ENCODE measurements at regions of chr9 and their contacts with region 1.

Region 1: DNA sequence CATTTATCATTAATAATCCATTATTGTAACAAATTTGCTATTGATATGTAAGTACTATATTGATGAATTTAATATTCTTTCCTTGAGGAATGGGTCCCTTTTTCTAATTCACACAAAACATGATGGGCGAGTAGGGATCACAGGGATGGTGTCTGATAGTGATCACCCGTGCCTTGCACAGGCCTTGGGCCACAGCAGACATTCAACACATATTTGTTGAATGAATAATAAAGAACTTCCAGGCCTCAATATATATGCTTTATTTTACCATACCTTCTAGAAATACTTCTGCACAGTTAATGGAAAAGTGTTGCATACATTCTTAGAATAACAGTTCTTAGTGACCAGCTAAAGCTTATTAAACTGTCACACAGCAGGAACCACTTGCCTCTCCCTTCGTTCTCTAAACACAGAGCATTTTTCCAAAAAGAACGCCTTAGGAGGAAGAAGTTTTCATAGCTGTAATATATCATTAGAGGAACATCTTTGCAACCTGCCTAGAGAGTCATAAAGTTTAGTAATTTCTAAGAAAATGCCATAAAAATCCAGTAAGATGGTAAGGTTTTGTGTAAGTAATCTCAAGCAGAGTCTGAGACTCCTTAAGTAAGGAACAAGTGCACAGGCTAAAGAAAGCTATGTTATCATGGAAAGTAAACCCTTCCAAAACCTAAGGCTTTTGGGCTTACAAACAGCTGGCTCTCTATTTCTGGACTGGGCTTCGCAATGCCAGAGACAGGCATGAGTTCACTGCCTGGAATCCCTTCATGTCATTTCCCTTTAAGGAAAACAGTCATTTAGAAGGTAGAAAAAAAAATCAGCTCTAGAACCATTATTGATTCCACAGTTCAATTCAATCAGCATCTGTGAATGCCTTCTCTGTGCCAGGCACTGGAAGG is 17.7 kb downstream of the TTLL11 start:
- DNase-seq: peak in 1 of 2 donors; percentile 82
- H3K4me3 ChIP-seq: peak overlapping the region in 1 of 2 donors; percentile 50
- H3K27ac ChIP-seq: peak overlapping the region; percentile 91 to 97
- H3K4me1 ChIP-seq: peaks cover 10 to 35% of the 10 kb centered on the region in 2 donors
- H3K27me3 ChIP-seq: no peaks in the 10 kb centered on the region
- CTCF ChIP-seq: no peak

Region 2: DNA sequence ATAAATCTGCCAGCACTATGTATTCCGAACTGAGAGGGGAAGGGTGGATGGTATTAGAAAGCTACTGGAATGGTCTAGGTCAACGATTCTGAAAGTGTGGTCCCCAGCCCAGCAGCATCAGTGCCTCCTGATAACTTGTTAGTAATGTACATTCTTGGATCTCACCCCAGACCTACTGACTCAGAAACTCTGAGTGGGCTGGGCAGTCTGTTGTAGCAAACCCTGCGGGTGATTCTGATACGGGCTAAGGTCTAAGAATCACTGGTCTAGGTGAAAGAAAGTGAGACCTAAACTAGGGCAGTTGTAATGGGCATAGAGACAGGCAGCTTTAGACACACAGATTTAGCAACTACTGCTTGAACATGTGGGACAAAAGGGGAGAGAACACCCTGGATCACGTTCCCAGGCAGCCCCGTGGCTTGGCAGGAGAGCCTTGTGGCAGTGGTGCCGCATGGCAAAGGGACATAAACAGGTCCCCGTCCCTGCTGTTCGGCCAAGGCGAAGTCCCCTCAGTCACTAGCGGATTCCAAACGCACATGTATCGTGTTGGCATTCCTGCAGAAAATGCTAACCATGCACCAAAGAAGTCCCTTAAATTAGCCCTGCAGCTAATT is 198.6 kb before region 1 on chr9:
- intact Hi-C with region 1: no loop called
- DNase-seq: no peak
- H3K4me3 ChIP-seq: no peak overlapping the region
- H3K27ac ChIP-seq: no peak overlapping the region
- H3K4me1 ChIP-seq: peaks cover 0 to 8% of the 10 kb centered on the region in 2 donors
- H3K27me3 ChIP-seq: no peaks in the 10 kb centered on the region
- CTCF ChIP-seq: no peak

Region 3: DNA sequence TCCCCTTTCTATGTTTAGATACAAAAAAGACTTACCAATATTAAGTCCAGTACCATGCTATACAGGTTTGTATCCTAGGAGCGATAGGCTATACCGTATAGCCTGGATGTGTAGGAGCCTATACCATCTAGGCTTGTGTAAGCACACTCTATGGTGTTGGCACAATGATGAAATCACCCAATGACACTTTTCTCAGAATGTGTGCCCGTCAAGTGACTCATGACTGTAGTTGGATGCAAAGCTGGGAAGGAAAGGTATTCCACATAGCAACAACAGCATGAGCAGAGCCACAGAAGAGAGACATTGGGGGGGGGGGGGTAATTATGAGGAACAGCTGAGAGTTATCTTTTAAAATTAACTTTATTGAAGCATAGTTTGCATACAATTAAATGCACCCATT is 45.5 kb before region 1 on chr9:
- intact Hi-C with region 1: loop called (anchors 5 kb)
- DNase-seq: no peak
- H3K4me3 ChIP-seq: no peak overlapping the region
- H3K27ac ChIP-seq: no peak overlapping the region
- H3K4me1 ChIP-seq: peaks cover 0 to 20% of the 10 kb centered on the region in 2 donors
- H3K27me3 ChIP-seq: no peaks in the 10 kb centered on the region
- CTCF ChIP-seq: no peak

Region 4: DNA sequence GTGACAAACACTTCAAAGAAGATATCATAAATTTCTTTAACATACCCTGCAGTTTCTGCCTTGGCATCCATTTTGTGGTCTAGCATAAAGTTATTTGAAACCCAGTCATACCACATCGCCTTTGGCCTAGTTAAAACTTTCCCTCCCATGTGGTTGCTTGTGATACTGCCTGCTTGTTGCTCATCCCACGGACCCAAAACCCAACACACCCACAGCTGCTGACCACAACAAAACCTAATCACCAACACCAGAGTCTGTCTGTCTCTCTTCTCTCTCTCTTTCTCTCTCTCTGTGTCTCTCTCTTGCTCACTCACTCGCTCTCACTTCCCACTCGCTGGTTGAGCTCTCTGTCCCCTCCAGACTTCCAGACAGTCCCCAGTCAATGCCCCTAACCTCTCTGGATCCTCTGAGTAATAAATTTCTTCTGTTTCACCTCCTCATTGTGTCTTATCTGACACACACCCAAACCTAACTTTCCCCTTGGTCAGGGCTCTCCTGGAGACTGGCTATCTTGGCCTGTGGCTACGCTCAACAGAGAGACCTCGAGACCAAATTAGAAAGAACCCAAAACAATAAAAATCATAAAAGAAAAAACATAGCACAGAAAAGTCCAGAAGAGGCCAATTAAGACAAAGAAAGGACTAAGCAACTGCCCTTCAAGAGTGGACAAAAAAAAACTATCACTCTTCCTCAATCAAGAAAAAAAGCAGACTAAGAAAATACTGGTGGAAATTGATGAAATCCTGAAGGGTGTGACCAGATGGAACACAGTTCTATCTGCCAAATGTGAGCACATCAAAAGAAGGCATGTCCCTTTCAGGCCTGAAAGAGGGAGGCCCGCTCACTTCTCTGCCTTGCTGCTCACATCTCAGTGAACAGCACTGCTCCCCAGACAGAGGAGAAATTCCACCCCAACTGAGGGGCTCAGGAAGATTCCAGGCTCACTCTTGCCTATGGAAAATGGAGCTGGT is 23.7 kb before region 1 on chr9:
- intact Hi-C with region 1: no loop called
- DNase-seq: no peak
- H3K4me3 ChIP-seq: no peak overlapping the region
- H3K27ac ChIP-seq: no peak overlapping the region
- H3K4me1 ChIP-seq: no peaks in the 10 kb centered on the region
- H3K27me3 ChIP-seq: no peaks in the 10 kb centered on the region
- CTCF ChIP-seq: no peak

Region 5: DNA sequence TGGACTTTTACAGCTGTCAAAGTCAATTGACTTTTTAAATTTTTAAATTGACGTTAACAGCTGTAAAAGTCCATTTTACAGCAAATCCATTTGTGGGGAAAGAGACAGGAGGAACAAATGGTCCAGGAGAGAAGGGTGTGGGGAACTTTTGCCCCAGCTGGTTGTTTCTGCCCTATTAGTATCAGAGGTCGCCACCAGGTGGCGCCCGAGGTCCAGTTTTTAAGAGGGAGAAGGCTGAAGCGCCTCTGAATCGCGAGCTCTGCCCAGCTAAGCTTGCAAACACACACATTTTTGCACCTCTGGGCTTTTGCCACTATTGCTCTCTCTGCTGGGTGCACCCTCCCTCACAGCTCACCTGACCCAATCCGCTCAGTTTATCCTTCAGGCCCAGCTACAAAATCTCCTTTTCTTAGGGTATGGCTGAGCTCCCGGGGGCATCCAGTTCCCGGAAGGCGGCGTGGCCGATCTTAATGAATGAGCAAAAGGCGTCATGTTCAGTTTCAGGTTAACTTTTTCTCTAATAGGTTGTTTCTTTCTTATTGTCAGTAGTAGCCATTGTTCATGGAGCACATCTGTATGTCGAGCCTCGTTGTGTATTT is 24.0 kb after region 1 on chr9:
- intact Hi-C with region 1: no loop called
- DNase-seq: peak; percentile 15 to 90
- H3K4me3 ChIP-seq: peak overlapping the region in 1 of 2 donors; percentile 25
- H3K27ac ChIP-seq: no peak overlapping the region
- H3K4me1 ChIP-seq: no peaks in the 10 kb centered on the region
- H3K27me3 ChIP-seq: no peaks in the 10 kb centered on the region
- CTCF ChIP-seq: peak; percentile 77 to 88 (median 82)

Region 6: GRCh38 chr9:122134822-122135528 is 59.6 kb after region 1 on chr9:
- intact Hi-C with region 1: no loop called
- DNase-seq: no peak
- H3K4me3 ChIP-seq: no peak overlapping the region
- H3K27ac ChIP-seq: no peak overlapping the region
- H3K4me1 ChIP-seq: no peaks in the 10 kb centered on the region
- H3K27me3 ChIP-seq: peaks cover 5% of the 10 kb centered on the region
- CTCF ChIP-seq: no peak

Measured in ascending aorta (tissue), 2 donors.